ENCODE measurements at regions of chr4 and their contacts with region 1.

Region 1: DNA sequence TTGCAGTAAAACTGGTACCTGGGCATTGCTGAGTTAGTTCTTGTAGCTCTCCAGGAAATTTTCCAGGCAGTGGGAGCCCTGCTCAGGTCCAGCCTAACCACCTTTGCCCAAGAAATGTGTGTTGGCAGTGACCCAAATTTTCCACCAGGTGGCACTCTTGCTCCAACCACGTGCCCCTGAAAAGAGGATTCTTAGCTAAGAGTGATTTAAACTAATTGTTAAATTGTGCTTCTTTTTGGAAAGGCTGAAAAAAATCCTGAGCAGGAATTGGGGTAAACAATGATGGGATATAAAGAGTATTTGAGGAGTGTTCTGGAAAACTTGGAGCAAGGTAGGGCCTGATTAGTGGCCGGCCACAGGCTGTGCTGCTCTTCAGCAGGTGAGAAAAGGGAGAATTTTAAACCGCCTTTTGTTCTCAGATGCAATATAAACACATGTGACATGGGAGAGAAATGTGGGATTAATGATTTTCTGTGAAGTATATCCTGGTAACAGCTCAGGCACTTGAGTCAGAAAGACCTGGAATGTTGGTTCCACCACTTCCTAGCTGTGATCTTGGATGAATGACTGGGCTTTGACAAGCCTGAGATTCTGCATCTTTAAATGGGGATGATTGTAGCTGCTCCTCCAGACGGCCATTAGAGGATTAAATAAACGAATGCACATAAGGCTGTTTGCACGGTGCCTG is 219.6 kb downstream of the PTTG2 start:
- DNase-seq: peak; percentile 70
- ATAC-seq: peak; percentile 38 to 60

Region 2: GRCh38 chr4:37623125-37623524 is 556.7 kb before region 1 on chr4:
- intact Hi-C with region 1: no loop called
- DNase-seq: no peak
- ATAC-seq: peak; percentile 72 to 75

Region 3: DNA sequence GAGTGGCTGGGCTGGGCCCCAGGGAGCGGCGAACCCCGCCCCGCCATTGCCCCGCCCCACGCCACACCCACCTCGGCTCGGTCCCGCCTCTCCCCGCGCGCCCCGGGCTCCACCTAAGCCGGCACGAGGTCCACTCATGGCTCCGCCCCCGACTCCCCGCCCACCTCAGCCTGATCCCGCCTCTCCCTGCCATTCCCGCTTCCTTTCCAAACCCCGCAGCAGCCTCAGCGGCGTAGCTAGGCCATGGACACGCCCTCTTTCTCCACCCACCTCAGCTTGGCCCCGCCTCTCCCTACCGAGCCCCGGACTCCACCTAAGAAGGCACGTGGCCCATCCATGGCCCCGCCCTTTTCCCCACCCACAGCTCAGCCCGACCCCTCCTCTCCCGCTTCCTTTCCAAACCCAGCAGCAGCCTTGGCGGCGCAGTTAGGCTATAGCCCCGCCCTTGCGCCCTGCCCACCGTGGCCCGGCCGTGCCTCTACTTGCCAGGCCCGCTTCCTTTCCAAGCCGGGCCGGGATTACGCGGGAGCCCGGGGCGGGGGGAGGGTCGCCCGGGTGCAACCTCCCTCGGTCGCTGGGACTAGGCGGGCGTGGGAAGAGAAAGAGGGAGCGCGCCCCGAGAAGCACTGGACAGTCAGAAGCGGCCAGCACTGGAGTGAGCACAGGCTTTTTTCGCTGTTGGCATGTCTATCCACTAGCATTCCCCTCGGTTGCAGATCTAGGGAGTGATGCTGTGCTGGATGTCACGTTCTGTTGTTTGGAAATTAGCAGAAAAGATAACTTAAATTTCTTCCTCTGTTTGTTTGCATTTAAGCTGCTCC is 493.3 kb before region 1 on chr4 and contains the start of gene RELL1:
- intact Hi-C with region 1: no loop called
- DNase-seq: peak; percentile 99
- ATAC-seq: peak; percentile 96 to 97
- total RNA-seq, gene RELL1: 26.0 to 29.4 TPM

Region 4: DNA sequence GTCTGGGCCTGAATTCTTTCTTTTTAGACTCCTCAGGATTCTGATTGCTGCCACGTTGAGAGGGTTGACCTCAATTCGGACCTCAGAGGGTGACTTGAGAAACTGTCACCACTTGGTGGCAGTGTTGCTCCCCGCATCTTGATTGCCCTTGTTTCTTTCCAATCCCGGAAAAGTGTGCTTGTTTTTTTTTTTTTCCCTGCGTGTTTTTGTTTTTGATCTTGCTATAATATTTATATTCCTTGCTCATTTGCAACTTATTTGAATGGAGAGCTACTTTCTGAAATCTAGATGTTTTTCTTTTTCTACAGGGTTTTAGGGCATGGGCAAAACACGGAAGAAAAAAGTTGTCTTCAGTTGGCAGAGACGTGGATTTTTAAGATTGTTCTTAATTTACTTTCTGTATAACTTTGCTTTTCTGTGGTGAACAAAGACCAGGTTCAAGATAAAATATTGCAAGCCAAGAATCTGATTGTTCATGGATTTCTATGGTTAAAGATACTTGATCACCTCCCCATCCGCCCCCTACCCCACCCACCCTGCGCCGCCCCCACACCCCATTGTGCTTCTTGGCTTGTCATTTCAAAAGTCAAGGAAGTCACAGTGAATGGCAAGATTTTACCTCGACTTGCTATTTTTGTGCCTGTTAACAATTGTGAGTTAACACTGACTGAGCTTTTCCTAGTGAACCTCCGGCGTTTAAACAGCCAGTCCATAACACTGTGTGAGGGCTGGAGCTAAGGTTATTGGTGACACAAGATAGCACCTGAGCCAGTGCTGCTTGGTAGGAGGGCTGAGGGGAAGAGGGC is 117.5 kb before region 1 on chr4:
- intact Hi-C with region 1: loop called in 1 of 2 experiments (anchors 5 kb)
- DNase-seq: peak; percentile 82
- ATAC-seq: peak; percentile 78

Region 5: DNA sequence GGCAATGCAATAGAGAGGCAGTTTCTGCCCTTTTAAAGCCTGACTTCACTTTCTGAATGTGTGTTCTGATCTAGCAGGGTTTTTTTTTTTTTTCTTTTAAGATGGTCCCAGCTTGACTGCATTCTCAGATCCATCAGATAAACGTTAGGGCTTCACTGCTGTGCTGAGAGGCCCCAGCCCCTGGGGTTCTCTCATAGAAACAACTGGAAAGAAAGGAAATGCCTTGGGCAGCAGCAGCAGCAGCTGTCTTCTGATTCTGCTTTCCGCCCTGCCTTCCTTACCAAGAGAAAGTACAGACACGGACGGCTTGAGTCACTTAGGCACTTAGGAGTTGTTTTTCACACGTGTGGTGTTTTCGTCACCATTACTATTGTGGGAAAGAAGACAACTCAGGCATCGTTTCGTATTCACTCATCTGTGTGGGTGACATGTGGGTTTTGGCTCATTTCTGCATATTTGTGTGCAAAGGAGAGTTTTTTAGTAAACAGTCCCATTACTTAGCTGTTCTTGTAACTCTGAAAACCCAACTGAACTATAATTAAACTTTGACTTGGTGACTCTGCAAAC is 47.6 kb before region 1 on chr4:
- intact Hi-C with region 1: no loop called
- DNase-seq: no peak
- ATAC-seq: peak; percentile 71 to 82

Region 6: DNA sequence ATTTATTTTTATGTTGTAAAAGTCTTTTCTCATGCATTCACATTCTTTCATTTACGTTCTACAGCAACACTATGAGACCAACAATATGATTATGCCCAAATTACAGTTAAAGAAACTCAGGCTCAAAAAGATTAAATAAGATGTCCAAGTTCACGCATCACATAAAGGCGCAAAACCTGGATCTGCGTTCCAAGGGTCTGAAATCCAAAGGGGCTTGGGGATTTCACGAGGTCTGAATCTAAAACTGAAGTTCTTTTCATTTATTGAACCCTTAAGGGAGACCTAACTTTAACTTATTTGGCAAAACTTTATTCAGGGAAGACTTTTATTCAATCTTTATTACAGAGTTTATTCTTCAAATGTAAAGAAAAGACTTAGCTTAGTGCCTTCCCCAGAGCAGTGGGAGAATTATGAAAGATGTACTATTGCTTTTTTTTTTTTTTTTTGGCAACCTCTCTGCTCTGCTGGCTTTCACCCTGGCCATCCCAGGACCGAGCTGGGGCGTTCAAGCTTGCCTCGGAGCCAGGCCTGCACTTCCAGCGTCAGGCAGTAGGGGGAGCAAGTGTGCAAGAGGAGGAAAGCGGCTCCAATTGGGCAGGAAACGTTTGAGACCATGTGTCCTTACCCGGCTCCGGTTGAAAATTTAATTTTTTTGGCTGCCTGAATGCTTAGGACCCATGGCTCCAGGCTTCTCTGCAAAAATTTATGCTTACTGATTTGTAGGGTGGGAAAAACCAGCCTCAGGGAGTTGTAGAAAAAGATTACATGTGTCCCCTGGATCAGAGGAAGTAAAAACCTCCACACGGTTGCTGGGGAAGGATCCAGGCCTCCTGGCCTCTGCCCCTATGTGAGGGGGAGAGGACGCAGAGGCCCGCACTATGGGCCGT is 139.9 kb after region 1 on chr4:
- intact Hi-C with region 1: loop called (anchors 5 kb)
- DNase-seq: peak; percentile 91
- ATAC-seq: peak; percentile 82 to 86

Region 7: DNA sequence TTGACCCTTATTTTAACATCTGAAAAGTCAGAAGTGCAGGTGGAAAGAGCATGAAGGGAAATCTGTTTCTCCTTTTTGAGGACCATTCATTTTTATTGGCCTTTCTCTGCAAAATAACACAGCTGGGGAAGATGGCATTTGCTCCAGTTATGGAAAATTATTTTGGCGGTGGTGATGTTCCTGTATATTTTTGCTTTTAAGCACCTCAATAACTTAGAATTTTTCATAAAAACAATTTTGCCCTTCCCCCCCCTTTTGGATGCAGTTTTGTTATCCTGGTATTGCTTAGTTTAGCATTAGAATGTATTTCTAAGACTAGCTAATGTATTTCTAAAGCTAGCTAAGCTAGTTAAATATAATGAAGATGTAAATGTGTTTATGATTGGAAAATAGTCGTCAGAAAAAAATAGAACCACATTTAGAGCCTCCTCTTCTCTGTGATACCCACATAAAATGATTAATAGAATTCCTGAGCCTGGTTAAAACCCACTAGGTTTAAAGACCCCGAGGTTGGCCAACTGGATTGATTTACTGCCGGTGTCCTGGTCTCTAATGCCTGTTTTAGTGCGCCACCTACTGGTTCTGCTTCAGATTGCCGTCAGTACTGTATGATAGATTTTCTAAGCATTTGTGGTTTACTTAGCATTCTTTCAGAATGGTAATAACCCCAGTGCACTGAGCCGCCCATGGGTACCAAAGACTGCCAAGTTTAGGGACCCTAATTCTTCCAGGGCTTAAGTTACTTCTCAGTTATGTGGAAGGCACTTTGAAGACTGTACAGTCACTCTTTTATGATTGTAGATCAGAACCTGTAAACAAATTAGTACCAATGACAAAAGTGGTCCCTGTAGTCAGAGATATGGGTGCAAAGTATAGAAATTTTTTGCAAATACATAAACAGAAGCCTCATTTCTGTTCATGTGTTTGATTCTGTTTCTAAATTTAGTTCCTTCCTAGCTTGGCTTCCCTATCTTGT is 495.6 kb after region 1 on chr4:
- intact Hi-C with region 1: loop called (anchors 2 to 5 kb)
- DNase-seq: peak; percentile 77
- ATAC-seq: peak; percentile 40 to 41

Region 8: DNA sequence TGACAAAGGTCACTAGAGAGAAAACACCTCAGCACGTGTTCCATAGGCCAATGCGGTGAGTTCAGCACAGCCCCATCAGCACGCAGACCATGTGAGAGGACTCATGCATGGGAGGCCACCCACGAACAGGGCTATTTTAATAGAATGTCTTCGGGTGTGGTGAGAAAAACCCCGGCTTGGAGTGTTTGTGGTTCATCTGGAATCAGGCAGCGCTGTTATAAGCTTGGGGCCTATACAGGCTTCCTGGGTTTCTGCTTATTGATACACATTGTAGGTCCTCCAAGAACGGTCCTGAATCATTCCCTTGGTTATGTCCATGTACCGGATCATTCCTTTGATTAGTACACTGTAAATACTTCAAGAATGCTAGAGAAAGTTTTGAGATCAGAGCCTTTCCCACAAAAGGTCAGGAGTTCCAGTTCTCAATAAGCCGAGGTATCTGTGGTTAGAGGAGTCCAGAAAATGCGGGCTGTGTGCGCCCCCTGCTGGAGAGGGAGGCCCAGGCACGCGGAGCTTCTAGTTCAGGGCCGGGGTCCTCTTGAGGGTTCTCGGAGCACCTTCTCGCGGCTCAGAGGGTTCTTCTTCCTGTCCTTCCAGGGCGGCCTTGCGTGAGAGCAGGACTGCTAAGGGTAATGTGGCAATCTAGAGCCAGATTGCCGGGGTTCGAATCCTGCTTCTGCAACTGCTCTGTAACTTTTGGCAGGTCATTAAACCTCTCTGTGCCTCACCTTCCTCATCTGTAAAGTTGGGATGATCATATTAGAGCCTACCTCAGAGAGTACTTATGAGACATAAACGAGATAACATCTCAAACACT is 551.2 kb after region 1 on chr4:
- intact Hi-C with region 1: loop called (anchors 2 to 5 kb)
- DNase-seq: peak; percentile 82
- ATAC-seq: peak; percentile 87 to 90

Region 9: DNA sequence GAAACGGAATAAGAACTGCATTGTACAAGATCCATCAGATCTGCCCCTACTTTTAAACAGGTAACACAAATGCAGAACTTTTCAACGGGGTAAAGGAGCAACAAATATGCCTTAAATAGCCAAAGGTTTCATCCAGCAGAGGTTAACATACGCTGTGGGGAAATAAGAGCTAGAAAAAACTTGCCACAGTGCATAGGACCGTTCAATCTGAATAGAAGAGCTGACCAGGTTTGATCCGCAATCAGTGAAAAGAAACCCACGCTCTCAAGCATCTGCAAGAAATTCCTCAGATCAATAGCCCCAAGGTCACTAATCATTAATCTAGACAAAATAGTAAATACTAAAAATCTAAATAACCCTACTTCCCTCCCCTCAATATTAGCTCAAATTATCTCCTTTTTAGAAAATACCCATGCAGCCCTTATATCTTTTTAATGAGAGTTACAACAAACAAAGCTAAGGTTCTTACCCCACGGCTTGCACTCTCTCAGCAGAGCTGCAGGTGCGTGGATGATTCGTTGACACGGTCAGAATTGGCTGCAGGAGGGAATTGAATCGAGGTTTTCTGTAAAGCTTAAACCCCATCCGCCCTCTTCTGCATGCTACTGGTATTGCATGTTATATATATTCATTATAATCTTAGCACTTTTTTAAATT is 602.7 kb after region 1 on chr4 and contains the start of gene TLR10:
- intact Hi-C with region 1: loop called in 1 of 2 experiments (anchors 2 kb)
- DNase-seq: no peak
- ATAC-seq: peak; percentile 53 to 70
- total RNA-seq, gene TLR10: 0.18 TPM in 1 of 2 donors, not detected in the other

Measured in left cardiac atrium (tissue), 4 donors.